ENCODE measurements at regions of chr1 and their contacts with region 1.

Region 1: GRCh38 chr1:51192213-51192843 is 43.7 kb upstream of the RNF11 start:
- DNase-seq: peak in 30 of 35 experiments; percentile 3 to 72 (median 36)
- ATAC-seq: peak in 1 of 4 experiments; percentile 50
- H3K4me3 ChIP-seq: no peak overlapping the region
- H3K4me3 Mint-ChIP-seq: no peak overlapping the region
- H3K27ac ChIP-seq: no peak overlapping the region
- H3K27ac Mint-ChIP-seq: no peak overlapping the region
- H3K4me1 ChIP-seq: no peaks in the 10 kb centered on the region
- H3K4me1 Mint-ChIP-seq: no peaks in the 10 kb centered on the region
- H3K27me3 ChIP-seq: no peaks in the 10 kb centered on the region
- H3K27me3 Mint-ChIP-seq: no peaks in the 10 kb centered on the region

Region 2: GRCh38 chr1:50774759-50775351 is 417.5 kb before region 1 on chr1:
- CTCF ChIA-PET with region 1: interaction called, 23 to 65 read pairs
- POLR2A ChIA-PET with region 1: no interaction called
- DNase-seq: peak in 1 of 35 experiments; percentile 69
- ATAC-seq: peak in 1 of 4 experiments; percentile 54
- H3K4me3 ChIP-seq: no peak overlapping the region
- H3K4me3 Mint-ChIP-seq: no peak overlapping the region
- H3K27ac ChIP-seq: no peak overlapping the region
- H3K27ac Mint-ChIP-seq: no peak overlapping the region
- H3K4me1 ChIP-seq: no peaks in the 10 kb centered on the region
- H3K4me1 Mint-ChIP-seq: peaks cover 10 to 17% (median 15%) of the 10 kb centered on the region in 3 donors
- H3K27me3 ChIP-seq: no peaks in the 10 kb centered on the region
- H3K27me3 Mint-ChIP-seq: no peaks in the 10 kb centered on the region

Region 3: GRCh38 chr1:51070640-51071039 is 121.7 kb before region 1 on chr1:
- CTCF ChIA-PET with region 1: no interaction called
- POLR2A ChIA-PET with region 1: no interaction called
- DNase-seq: no peak
- ATAC-seq: no peak
- H3K4me3 ChIP-seq: no peak overlapping the region
- H3K4me3 Mint-ChIP-seq: no peak overlapping the region
- H3K27ac ChIP-seq: no peak overlapping the region
- H3K27ac Mint-ChIP-seq: no peak overlapping the region
- H3K4me1 ChIP-seq: no peaks in the 10 kb centered on the region
- H3K4me1 Mint-ChIP-seq: no peaks in the 10 kb centered on the region
- H3K27me3 ChIP-seq: peaks cover 0 to 5% of the 10 kb centered on the region in 2 experiments
- H3K27me3 Mint-ChIP-seq: peaks cover 36 to 39% of the 10 kb centered on the region in 2 donors

Region 4: DNA sequence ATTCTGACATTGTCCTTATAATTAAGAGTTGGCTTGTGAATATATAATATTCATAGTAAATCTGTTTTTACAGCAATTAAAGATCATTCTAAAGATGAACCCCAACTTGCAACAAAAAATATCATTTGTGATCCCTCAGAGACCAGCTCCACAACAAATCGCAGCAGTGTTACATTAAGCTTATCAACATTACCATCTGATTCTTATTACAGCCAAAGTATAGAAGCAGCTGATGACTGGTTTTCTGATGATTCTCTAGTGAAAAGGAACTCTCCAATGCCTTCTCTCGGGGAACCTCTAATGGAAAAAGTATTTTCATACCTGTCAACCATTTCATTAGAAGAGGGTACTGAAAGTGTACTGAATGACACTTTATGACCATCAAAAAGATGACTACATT is 44.9 kb before region 1 on chr1:
- CTCF ChIA-PET with region 1: no interaction called
- POLR2A ChIA-PET with region 1: no interaction called
- DNase-seq: no peak
- ATAC-seq: no peak
- H3K4me3 ChIP-seq: no peak overlapping the region
- H3K4me3 Mint-ChIP-seq: no peak overlapping the region
- H3K27ac ChIP-seq: no peak overlapping the region
- H3K27ac Mint-ChIP-seq: no peak overlapping the region
- H3K4me1 ChIP-seq: no peaks in the 10 kb centered on the region
- H3K4me1 Mint-ChIP-seq: no peaks in the 10 kb centered on the region
- H3K27me3 ChIP-seq: peaks cover 0 to 6% of the 10 kb centered on the region in 2 experiments
- H3K27me3 Mint-ChIP-seq: peaks cover 8 to 16% of the 10 kb centered on the region in 2 donors

Region 5: DNA sequence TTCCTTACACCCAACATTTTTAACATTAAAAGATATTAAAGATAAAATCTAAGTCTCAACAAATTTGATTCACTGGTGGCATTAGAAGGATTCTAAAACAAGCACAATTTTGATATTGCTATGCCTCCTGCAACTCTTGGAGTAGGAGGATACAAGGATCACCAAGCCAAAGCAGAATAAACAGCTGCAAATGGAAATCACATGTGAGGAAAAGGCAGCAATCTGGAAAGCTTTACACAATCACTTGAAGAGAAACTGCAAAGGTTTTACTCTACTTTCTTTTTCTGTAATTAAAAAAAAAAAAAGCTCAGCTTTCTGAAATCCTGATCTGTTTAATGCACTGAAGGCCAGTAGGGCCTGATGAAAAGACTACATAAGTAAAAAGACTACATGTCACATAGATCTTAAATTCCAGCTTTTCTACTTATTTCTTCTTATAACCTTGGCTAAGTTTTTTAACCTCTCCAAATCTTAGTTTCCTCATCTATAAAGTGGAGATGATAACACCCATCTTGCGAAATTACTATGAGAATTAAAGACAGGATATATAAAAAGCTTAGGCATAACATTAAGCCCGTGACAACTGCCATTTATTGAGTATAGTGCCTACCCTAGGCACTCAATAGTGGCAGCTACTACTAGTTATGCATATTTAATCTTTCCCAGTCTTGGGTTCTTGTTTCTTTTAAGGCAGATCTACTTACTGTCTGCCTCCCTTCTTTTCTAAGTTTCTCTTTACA is 253.2 kb after region 1 on chr1:
- CTCF ChIA-PET with region 1: interaction called in 1 of 2 experiments, 10 read pairs
- POLR2A ChIA-PET with region 1: no interaction called
- DNase-seq: no peak
- ATAC-seq: no peak
- H3K4me3 ChIP-seq: no peak overlapping the region
- H3K4me3 Mint-ChIP-seq: no peak overlapping the region
- H3K27ac ChIP-seq: no peak overlapping the region
- H3K27ac Mint-ChIP-seq: no peak overlapping the region
- H3K4me1 ChIP-seq: peaks cover 0 to 3% of the 10 kb centered on the region in 2 experiments
- H3K4me1 Mint-ChIP-seq: peaks cover 14 to 44% (median 24%) of the 10 kb centered on the region in 3 donors
- H3K27me3 ChIP-seq: no peaks in the 10 kb centered on the region
- H3K27me3 Mint-ChIP-seq: no peaks in the 10 kb centered on the region